Activated CD4-positive, alpha-beta T cell treated with anti-CD3 and anti-CD28 coated beads, Interleukin-2, amount 10 ng/mL, durations not matched to agents 24 days and 14 days (primary cell): ENCODE measurements at regions of chr11 and their contacts with region 1.

Region 1: GRCh38 chr11:62787005-62787759 is at the start of gene TMEM179B:
- DNase-seq: peak; percentile 99
- H3K4me3 Mint-ChIP-seq: peak within 1 kb of the TSS; percentile 93
- H3K27ac Mint-ChIP-seq: peak within 1 kb of the TSS; percentile 92
- H3K4me1 Mint-ChIP-seq: peaks cover 37% of the 10 kb centered on the region
- H3K27me3 Mint-ChIP-seq: no peaks in the 10 kb centered on the region
- total RNA-seq, gene TMEM179B: 32.9 and 36.3 TPM in 2 replicates

Region 2: GRCh38 chr11:62665075-62665598 is 122.0 kb before region 1 on chr11 and contains the starts of genes C11orf98 and CSKMT:
- intact Hi-C with region 1: loop called (anchors 1 kb)
- DNase-seq: peak; percentile 99
- H3K4me3 Mint-ChIP-seq: peak within 1 kb of the TSS; percentile 98
- H3K27ac Mint-ChIP-seq: peak within 1 kb of the TSS; percentile 93
- H3K4me1 Mint-ChIP-seq: peaks cover 26% of the 10 kb centered on the region
- H3K27me3 Mint-ChIP-seq: no peaks in the 10 kb centered on the region
- total RNA-seq, gene C11orf98: 143 and 147 TPM in 2 replicates
- total RNA-seq, gene CSKMT: 59.5 and 60.9 TPM in 2 replicates

Region 3: GRCh38 chr11:62753736-62754603 is 33.2 kb before region 1 on chr11 and contains the start of gene ZBTB3:
- intact Hi-C with region 1: loop called (anchors 1 kb)
- DNase-seq: peak; percentile 98
- H3K4me3 Mint-ChIP-seq: peak within 1 kb of the TSS; percentile 98
- H3K27ac Mint-ChIP-seq: peak within 1 kb of the TSS; percentile 97
- H3K4me1 Mint-ChIP-seq: peaks cover 16% of the 10 kb centered on the region
- H3K27me3 Mint-ChIP-seq: no peaks in the 10 kb centered on the region
- total RNA-seq, gene ZBTB3: 7.5 and 11.1 TPM in 2 replicates

Region 4: GRCh38 chr11:62805076-62805892 is 18.1 kb after region 1 on chr11 and contains the start of gene NXF1:
- intact Hi-C with region 1: loop called (anchors 1 kb)
- DNase-seq: peak; percentile 99
- H3K4me3 Mint-ChIP-seq: peak within 1 kb of the TSS; percentile 100
- H3K27ac Mint-ChIP-seq: peak within 1 kb of the TSS; percentile 95
- H3K4me1 Mint-ChIP-seq: peaks cover 30% of the 10 kb centered on the region
- H3K27me3 Mint-ChIP-seq: no peaks in the 10 kb centered on the region
- total RNA-seq, gene NXF1: 133 and 147 TPM in 2 replicates

Region 5: GRCh38 chr11:62841361-62842184 is 54.4 kb after region 1 on chr11:
- intact Hi-C with region 1: loop called (anchors 1 kb)
- DNase-seq: peak; percentile 95
- H3K4me3 Mint-ChIP-seq: no peak overlapping the region
- H3K27ac Mint-ChIP-seq: no peak overlapping the region
- H3K4me1 Mint-ChIP-seq: peaks cover 26% of the 10 kb centered on the region
- H3K27me3 Mint-ChIP-seq: no peaks in the 10 kb centered on the region